Activated T-helper 1 cell treated with anti-CD3 and anti-CD28 coated beads, Interleukin-12 subunit alpha, Interleukin-12 subunit beta, Interleukin-2, Interleukin-4 antibody, amounts not matched to agents 30 ng/mL and 10 ng/mL and 1 ng/mL, durations not matched to agents 14 hours and 24 hours and 36 hours (primary cell): ENCODE measurements at regions of chr2 and their contacts with region 1.

Region 1: DNA sequence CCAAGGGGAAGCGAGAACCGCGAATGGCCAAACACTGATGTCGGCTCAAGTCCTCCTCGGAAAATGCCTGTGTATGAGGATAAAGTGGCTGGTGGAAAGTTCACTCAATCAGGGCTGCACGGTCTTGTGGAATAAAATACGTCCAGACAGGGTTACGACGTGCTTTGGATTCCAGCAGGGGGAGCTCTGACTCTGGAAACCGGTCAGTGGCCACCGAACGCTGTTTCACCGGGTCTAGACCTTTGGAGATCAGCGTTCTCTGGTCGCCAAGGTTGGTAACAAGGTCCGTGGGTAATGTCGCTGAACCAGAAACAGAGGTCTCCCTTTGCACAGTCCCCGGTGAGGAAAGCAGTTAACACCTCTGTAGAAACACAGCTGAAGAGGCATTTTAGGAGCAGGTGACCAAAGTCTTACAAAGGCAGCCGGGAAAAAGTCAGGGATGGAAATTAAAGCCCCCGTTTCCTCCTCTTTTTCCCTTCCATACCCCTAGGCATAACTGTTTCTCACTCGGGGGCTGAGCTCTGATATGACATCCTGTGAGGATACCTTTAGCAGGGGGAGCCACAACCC is 47.8 kb downstream of the CDCA7 start:
- DNase-seq: peak; percentile 60
- H3K4me3 Mint-ChIP-seq: no peak overlapping the region
- H3K27ac Mint-ChIP-seq: no peak overlapping the region
- H3K4me1 Mint-ChIP-seq: peaks cover 10% of the 10 kb centered on the region
- H3K27me3 Mint-ChIP-seq: peaks cover 68% of the 10 kb centered on the region

Region 2: DNA sequence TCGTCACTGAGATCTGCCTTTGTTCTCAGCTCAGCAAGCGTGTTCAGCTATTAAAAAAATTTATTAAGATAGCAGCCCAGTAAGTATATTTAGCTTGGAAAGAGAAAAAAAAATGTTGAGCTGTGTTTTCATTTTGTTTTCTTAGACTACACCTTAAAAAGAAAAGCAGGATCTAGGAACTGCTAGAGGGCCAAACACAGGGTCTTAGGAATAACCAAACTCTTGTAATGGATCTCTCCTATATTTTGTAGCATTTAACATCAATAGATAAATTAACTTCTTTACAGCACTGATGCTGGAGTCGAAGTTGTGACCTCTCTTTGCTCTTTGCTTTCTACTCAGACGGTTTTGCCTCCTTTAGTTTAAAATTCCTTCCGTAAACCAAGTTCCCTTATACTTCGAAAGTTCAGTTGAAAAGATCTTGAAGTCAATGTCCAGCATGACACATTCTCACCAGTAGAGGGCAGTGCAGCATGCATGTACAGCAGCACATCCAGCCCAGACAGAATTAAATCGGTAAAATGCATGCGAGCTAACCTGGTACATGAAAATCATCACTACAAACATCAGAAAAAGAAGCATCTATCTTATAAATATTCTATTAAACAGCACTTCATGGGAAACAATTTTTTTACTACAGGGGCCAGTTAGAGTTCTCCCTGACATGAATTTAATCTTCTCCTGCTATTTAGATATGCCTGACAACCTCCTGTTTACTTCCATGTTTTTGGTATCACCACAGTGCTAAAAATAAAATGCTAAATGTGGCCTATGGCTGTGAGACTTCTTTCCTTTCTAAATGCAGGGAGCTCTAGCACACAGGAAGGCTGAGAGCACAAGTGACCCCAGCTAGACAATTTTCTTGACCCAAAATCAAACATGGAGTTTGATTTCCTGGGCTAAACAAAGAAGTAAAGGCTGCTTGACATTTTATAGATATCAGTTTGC is 375.0 kb before region 1 on chr2:
- intact Hi-C with region 1: loop called (anchors 5 kb)
- DNase-seq: peak; percentile 57
- H3K4me3 Mint-ChIP-seq: no peak overlapping the region
- H3K27ac Mint-ChIP-seq: no peak overlapping the region
- H3K4me1 Mint-ChIP-seq: no peaks in the 10 kb centered on the region
- H3K27me3 Mint-ChIP-seq: peaks cover 11% of the 10 kb centered on the region

Region 3: GRCh38 chr2:173205375-173205774 is 197.1 kb before region 1 on chr2:
- intact Hi-C with region 1: no loop called
- DNase-seq: no peak
- H3K4me3 Mint-ChIP-seq: no peak overlapping the region
- H3K27ac Mint-ChIP-seq: no peak overlapping the region
- H3K4me1 Mint-ChIP-seq: peaks cover 2% of the 10 kb centered on the region
- H3K27me3 Mint-ChIP-seq: no peaks in the 10 kb centered on the region

Region 4: DNA sequence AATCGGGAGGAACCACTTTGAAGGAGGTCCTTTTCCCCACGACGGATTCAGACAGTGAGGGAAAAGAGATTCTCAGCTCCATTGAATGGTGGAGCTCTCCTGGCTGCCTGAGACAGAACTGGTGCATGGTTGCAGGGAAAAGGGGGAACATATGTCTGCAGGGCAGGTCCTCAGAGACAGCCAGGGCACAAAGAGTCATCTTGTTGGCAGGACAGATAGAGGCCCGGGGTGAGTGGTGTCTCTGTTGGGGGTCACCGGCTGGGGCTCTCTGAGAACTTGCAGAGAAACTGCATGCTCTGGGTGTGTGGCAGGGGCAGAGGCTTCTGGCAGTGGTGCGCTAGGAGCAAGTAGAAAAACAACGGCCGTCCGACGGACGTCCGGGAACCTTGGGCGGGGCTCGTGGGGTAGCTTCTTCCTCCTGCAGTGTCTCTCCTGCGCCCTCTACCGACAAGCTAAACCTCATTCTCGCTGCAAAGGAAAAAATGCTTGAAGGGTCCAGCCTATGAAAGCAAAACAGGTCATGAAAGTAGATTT is 46.5 kb after region 1 on chr2:
- intact Hi-C with region 1: loop called (anchors 1 kb)
- DNase-seq: peak; percentile 44
- H3K4me3 Mint-ChIP-seq: peak overlapping the region; percentile 48
- H3K27ac Mint-ChIP-seq: no peak overlapping the region
- H3K4me1 Mint-ChIP-seq: peaks cover 15% of the 10 kb centered on the region
- H3K27me3 Mint-ChIP-seq: peaks cover 23% of the 10 kb centered on the region

Region 5: GRCh38 chr2:174039551-174040416 is 637.3 kb after region 1 on chr2:
- intact Hi-C with region 1: loop called (anchors 1 kb)
- DNase-seq: peak; percentile 72
- H3K4me3 Mint-ChIP-seq: peak overlapping the region; percentile 40
- H3K27ac Mint-ChIP-seq: peak overlapping the region; percentile 89
- H3K4me1 Mint-ChIP-seq: peaks cover 16% of the 10 kb centered on the region
- H3K27me3 Mint-ChIP-seq: no peaks in the 10 kb centered on the region

Region 6: GRCh38 chr2:174334781-174335251 is 932.3 kb after region 1 on chr2 and contains the start of gene SP9:
- intact Hi-C with region 1: loop called (anchors 2 kb)
- DNase-seq: no peak
- H3K4me3 Mint-ChIP-seq: peak within 1 kb of the TSS; percentile 53
- H3K27ac Mint-ChIP-seq: peak within 1 kb of the TSS; percentile 81
- H3K4me1 Mint-ChIP-seq: peaks cover 28% of the 10 kb centered on the region
- H3K27me3 Mint-ChIP-seq: peaks cover 77% of the 10 kb centered on the region
- total RNA-seq, gene SP9: not detected in 2 replicates